WTC11 (cell line): ENCODE measurements at regions of chr17 and their contacts with region 1.

Region 1: DNA sequence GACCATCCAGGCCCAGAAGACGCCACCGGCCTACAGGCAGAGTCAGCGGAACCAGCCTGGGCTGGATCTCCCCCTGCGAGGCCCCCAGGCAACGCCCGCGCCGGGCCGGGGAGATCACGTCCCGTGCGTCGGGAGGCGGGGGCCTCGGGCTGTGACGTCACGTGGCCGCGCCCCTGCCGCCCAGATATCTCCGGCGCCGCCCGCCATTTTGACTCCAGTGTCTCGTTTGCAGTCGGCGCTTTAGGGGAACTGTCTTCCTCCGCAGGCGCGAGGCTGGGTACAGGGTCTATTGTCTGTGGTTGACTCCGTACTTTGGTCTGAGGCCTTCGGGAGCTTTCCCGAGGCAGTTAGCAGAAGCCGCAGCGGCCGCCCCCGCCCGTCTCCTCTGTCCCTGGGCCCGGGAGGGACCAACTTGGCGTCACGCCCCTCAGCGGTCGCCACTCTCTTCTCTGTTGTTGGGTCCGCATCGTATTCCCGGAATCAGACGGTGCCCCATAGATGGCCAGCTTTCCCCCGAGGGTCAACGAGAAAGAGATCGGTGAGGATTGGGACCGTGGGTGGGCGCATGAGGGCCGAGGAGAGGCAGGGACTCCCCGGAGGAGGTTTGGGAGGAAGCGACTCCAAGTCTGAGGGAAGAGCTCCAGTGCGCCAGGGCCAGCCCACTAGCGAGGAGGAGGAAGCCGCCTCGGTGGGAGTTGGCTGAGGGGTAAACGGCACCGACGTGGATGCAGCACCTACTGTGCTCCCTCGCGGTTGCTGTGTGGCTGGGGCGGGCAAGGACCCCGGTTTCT is at the start of gene WSB1:
- DNase-seq: peak; percentile 93
- ATAC-seq: peak; percentile 89
- H3K4me3 Mint-ChIP-seq: peak within 1 kb of the TSS; percentile 98
- H3K27ac Mint-ChIP-seq: peak within 1 kb of the TSS; percentile 100
- H3K4me1 Mint-ChIP-seq: peaks cover 28% of the 10 kb centered on the region
- H3K27me3 Mint-ChIP-seq: no peaks in the 10 kb centered on the region
- CTCF ChIP-seq: no peak
- total RNA-seq, gene WSB1: 167 to 223 TPM (median 221 TPM) in 3 replicates

Region 2: GRCh38 chr17:27226615-27227230 is 67.4 kb before region 1 on chr17:
- CTCF ChIA-PET with region 1: no interaction called
- POLR2A ChIA-PET with region 1: no interaction called
- DNase-seq: no peak
- ATAC-seq: no peak
- H3K4me3 Mint-ChIP-seq: no peak overlapping the region
- H3K27ac Mint-ChIP-seq: no peak overlapping the region
- H3K4me1 Mint-ChIP-seq: no peaks in the 10 kb centered on the region
- H3K27me3 Mint-ChIP-seq: peaks cover 3% of the 10 kb centered on the region; the same call in 1 of the 2 replicates
- CTCF ChIP-seq: no peak

Region 3: GRCh38 chr17:27236717-27237315 is 57.3 kb before region 1 on chr17:
- CTCF ChIA-PET with region 1: interaction called, 20 read pairs
- POLR2A ChIA-PET with region 1: interaction called, 3 read pairs
- DNase-seq: peak; percentile 71
- ATAC-seq: peak; percentile 53
- H3K4me3 Mint-ChIP-seq: no peak overlapping the region
- H3K27ac Mint-ChIP-seq: no peak overlapping the region
- H3K4me1 Mint-ChIP-seq: peaks cover 7% of the 10 kb centered on the region
- H3K27me3 Mint-ChIP-seq: peaks cover 3% of the 10 kb centered on the region; the same call in 1 of the 2 replicates
- CTCF ChIP-seq: peak; percentile 62

Region 4: GRCh38 chr17:27245230-27245696 is 48.8 kb before region 1 on chr17:
- CTCF ChIA-PET with region 1: interaction called, 14 read pairs
- POLR2A ChIA-PET with region 1: interaction called, 5 read pairs
- DNase-seq: peak; percentile 81
- ATAC-seq: peak; percentile 97
- H3K4me3 Mint-ChIP-seq: peak overlapping the region; percentile 2; the same call in 1 of the 2 replicates
- H3K27ac Mint-ChIP-seq: no peak overlapping the region
- H3K4me1 Mint-ChIP-seq: peaks cover 25% of the 10 kb centered on the region
- H3K27me3 Mint-ChIP-seq: peaks cover under 1% of the 10 kb centered on the region; the same call in 1 of the 2 replicates
- CTCF ChIP-seq: no peak

Region 5: GRCh38 chr17:27256225-27257030 is 37.7 kb before region 1 on chr17:
- CTCF ChIA-PET with region 1: no interaction called
- POLR2A ChIA-PET with region 1: no interaction called
- DNase-seq: no peak
- ATAC-seq: no peak
- H3K4me3 Mint-ChIP-seq: no peak overlapping the region
- H3K27ac Mint-ChIP-seq: no peak overlapping the region
- H3K4me1 Mint-ChIP-seq: no peaks in the 10 kb centered on the region
- H3K27me3 Mint-ChIP-seq: peaks cover 20% of the 10 kb centered on the region
- CTCF ChIP-seq: no peak

Region 6: DNA sequence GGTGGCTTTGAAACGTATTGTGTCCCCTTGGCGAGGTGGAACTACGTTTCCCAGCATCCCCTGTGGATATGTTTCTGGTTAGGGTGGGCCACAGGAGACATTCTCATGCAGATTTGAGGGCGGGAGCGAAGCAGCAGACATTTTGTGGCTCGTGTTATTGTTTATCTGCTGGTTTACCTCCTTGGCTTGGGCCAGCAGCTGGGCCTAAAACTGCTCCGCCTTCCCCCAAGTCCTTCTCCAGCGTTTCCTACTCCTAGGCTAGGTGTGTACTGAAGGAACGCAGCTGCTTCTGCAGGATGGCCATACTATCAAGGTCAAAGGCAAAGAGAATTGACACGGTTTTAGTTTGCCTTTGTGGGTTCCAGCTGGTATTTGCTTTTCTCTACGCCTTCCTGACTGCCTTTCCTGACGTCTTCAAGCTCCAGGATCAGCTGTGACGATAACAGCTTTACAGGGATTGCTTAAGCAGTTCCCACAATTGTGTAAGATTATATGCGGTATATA is 17.4 kb before region 1 on chr17:
- CTCF ChIA-PET with region 1: no interaction called
- POLR2A ChIA-PET with region 1: interaction called, 14 read pairs
- DNase-seq: peak; percentile 79
- ATAC-seq: peak; percentile 97
- H3K4me3 Mint-ChIP-seq: peak overlapping the region; percentile 59
- H3K27ac Mint-ChIP-seq: peak overlapping the region; percentile 99
- H3K4me1 Mint-ChIP-seq: peaks cover 11% of the 10 kb centered on the region
- H3K27me3 Mint-ChIP-seq: no peaks in the 10 kb centered on the region
- CTCF ChIP-seq: no peak

Region 7: DNA sequence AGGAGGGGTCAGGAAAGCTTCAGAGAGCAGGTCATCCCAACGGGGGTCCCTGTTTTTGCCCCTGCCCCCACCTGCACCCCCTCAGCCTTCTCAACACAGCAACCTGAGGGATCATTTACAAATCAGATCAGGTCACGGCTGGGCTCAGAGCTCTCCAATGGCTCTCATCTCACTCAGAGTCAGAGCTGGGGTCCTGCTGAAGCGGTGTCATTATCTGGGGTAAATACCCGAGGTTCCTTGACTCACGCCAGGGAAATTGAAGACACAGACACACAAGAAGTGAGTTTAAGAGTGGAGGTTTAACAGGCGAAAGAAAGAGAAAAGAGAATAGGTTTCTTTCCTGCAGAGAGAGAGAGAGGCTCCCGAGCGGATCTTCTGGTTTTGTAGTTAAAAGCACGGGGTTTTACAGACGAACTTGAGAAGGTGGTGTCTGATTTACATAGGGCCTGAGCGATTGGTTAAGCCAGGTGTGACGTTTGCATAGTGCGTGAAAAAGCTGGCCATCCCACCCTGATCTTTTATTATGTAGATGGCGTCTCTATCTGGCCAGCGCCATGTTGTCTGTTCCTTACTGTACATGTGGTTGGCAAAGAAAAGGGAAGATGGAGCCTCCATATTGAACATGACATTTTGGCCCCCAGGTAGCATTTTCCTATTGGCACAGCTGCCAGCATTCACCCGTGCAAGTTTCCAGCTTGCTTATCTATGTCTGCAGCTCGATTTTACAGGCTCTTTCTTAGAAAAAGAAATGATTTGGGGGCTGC is 51.2 kb after region 1 on chr17:
- CTCF ChIA-PET with region 1: interaction called, 4 read pairs
- POLR2A ChIA-PET with region 1: interaction called, 18 read pairs
- DNase-seq: peak; percentile 72
- ATAC-seq: peak; percentile 67
- H3K4me3 Mint-ChIP-seq: peak overlapping the region; percentile 85
- H3K27ac Mint-ChIP-seq: peak overlapping the region; percentile 100
- H3K4me1 Mint-ChIP-seq: peaks cover 53% of the 10 kb centered on the region
- H3K27me3 Mint-ChIP-seq: no peaks in the 10 kb centered on the region
- CTCF ChIP-seq: no peak